ENCODE measurements at regions of chr15 and their contacts with region 1.

Region 1: GRCh38 chr15:73950831-73951561 is 24.7 kb downstream of the LOXL1 start:
- DNase-seq: peak; percentile 96
- H3K4me3 ChIP-seq: no peak overlapping the region
- H3K27ac ChIP-seq: peak overlapping the region; percentile 75 to 92
- H3K4me1 ChIP-seq: peaks cover 20 to 38% of the 10 kb centered on the region in 2 experiments
- H3K27me3 ChIP-seq: no peaks in the 10 kb centered on the region
- CTCF ChIP-seq: peak; percentile 87
- EP300 ChIP-seq: peak in 1 of 2 experiments; percentile 55; a peak in 2 of 4 replicates
- RAD21 ChIP-seq: peak; percentile 93

Region 2: GRCh38 chr15:73617301-73617831 is 333.6 kb before region 1 on chr15:
- CTCF ChIA-PET with region 1: no interaction called
- POLR2A ChIA-PET with region 1: no interaction called
- DNase-seq: no peak
- H3K4me3 ChIP-seq: no peak overlapping the region
- H3K27ac ChIP-seq: no peak overlapping the region
- H3K4me1 ChIP-seq: peaks cover 0 to 6% of the 10 kb centered on the region in 2 experiments; a peak in 3 of 4 replicates
- H3K27me3 ChIP-seq: no peaks in the 10 kb centered on the region
- CTCF ChIP-seq: no peak
- EP300 ChIP-seq: no peak
- RAD21 ChIP-seq: no peak

Region 3: DNA sequence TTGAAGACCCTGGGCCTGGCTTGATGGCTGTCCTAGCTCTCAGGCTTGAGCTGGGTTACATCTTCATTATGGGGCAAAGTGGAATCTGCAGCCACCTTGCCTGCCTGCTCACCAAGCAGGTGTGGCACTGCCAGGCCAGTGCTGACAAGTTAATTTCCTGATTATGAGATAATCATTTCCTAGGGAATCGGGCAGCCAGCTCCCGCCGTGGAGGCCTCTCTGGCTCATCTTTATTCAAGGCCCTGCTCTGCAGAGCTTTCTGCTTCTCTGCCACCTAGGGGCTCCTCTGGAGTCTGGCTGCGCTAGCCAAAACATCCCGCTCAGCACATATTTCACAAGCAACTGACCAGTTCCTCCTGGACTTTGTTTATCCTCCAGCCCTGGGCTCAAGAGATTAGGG is 14.8 kb before region 1 on chr15:
- CTCF ChIA-PET with region 1: interaction called, 10 read pairs
- POLR2A ChIA-PET with region 1: interaction called, 4 read pairs
- DNase-seq: peak; percentile 70
- H3K4me3 ChIP-seq: no peak overlapping the region
- H3K27ac ChIP-seq: peak overlapping the region in 1 of 2 experiments; percentile 64; a peak in 2 of 4 replicates
- H3K4me1 ChIP-seq: peaks cover 53 to 67% of the 10 kb centered on the region in 2 experiments
- H3K27me3 ChIP-seq: no peaks in the 10 kb centered on the region
- CTCF ChIP-seq: peak; percentile 24; the same call in 1 of the 2 replicates
- EP300 ChIP-seq: no peak
- RAD21 ChIP-seq: peak; percentile 36

Region 4: DNA sequence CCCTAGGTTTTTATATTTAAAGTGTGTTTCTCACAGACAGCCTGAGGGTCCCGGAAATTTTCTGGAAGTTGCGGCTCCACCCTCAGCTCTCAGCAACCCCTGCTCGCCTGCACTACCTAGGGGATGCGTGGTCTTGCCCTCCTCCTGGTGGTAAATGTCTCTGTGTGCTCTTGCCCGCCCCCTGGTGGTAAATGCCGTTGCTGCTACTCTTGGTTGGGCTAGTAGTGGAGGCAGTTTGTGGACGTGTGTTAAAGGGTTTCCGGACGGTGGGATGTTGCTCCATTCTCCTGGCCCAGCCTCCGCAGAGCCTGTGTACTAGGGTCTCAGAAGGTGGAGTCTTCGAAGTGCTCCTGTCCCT is 13.7 kb after region 1 on chr15:
- CTCF ChIA-PET with region 1: interaction called, 54 read pairs
- POLR2A ChIA-PET with region 1: no interaction called
- DNase-seq: peak; percentile 82
- H3K4me3 ChIP-seq: peak overlapping the region in 1 of 2 experiments; percentile 29; a peak in 1 of 4 replicates
- H3K27ac ChIP-seq: no peak overlapping the region
- H3K4me1 ChIP-seq: peaks cover 6 to 26% of the 10 kb centered on the region in 2 experiments; a peak in 3 of 4 replicates
- H3K27me3 ChIP-seq: no peaks in the 10 kb centered on the region
- CTCF ChIP-seq: peak; percentile 92
- EP300 ChIP-seq: no peak
- RAD21 ChIP-seq: peak; percentile 70

Region 5: DNA sequence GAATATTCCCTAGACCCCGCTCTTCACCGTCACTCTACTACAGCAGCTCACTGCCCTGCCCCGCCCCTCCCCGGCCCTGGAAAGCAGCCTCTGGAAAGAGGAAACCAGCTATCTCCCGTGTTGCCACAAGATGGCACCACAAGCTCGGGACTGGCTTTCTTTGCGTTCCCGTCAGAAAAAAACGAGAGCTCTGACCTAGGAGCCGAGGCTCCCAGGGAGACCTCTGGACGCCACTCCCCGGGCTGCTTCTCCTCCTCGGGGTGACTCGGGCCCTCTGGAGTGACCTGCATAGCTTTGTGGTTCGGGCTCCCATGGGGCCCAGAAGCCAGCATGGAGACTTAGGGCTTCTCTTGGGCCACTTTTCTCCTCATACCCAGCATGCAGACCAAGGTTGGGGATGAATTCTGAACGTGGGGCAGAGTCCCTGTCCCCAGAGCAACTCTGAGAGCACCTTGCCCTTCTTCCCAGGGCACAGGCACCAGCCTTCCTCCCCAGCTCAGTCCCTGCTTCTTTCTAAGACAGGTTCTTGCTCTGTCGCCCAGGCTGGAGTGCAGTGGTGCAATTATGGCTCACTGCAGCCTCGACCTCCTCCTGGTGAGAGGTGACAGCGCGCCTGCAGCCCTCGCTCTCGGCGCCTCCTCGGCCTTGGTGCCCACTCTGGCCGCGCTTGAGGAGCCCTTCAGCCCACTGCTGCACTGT is 22.1 kb after region 1 on chr15:
- CTCF ChIA-PET with region 1: interaction called, 20 read pairs
- POLR2A ChIA-PET with region 1: interaction called, 6 read pairs
- DNase-seq: peak; percentile 93
- H3K4me3 ChIP-seq: peak overlapping the region in 1 of 2 experiments; percentile 50; a peak in 1 of 4 replicates
- H3K27ac ChIP-seq: no peak overlapping the region
- H3K4me1 ChIP-seq: peaks cover 8 to 10% of the 10 kb centered on the region in 2 experiments; a peak in 2 of 4 replicates
- H3K27me3 ChIP-seq: no peaks in the 10 kb centered on the region
- CTCF ChIP-seq: peak; percentile 84
- EP300 ChIP-seq: no peak
- RAD21 ChIP-seq: peak; percentile 97

Region 6: DNA sequence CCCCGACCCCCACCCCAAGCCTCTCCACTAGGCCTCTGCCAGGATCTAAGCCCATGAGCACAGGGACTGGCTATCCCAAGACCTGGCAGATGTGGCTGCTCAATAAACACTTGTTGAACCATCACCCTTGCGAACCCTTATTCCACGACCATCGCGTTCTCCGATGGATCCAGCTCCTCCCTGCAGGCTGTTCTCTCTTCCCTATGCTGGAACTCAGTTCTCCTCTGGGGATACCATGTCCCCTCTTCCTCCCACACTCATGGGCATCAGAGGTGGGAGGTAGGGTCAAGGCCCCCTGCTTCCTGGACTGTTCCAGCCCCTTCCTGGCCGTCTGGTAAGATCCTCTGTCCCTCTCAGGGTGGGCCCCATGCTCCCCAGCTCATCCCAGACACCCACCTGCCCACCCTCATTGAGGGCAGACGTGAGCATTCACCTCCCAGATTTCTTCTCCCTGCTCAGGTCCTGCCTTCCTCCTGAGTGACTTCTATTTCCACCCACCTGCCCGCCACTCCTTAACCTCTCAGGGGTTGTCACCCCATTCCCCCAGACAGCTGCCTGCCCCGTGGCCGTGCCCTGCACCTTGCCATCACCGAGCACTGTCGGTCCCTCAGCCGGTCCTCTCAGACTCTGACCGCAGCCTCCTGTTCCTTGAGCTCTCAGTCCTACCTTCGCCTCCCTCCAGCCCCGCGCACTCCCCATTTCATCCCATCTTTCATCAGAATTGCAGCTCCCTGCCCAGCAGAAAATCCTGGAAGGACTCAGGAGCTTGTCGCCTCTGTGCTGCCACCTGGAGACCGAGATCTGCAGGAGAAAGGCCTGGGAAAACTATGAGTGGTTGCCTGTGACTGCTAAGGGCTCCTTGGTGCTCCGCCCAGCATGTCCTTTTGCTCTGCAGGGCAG is 85.5 kb after region 1 on chr15:
- CTCF ChIA-PET with region 1: interaction called, 17 read pairs
- POLR2A ChIA-PET with region 1: interaction called, 4 read pairs
- DNase-seq: peak; percentile 76
- H3K4me3 ChIP-seq: no peak overlapping the region; a peak in 1 of 4 replicates
- H3K27ac ChIP-seq: no peak overlapping the region
- H3K4me1 ChIP-seq: peaks cover 8 to 22% of the 10 kb centered on the region in 2 experiments; a peak in 2 of 4 replicates
- H3K27me3 ChIP-seq: no peaks in the 10 kb centered on the region
- CTCF ChIP-seq: peak; percentile 64
- EP300 ChIP-seq: no peak
- RAD21 ChIP-seq: peak; percentile 55

Region 7: DNA sequence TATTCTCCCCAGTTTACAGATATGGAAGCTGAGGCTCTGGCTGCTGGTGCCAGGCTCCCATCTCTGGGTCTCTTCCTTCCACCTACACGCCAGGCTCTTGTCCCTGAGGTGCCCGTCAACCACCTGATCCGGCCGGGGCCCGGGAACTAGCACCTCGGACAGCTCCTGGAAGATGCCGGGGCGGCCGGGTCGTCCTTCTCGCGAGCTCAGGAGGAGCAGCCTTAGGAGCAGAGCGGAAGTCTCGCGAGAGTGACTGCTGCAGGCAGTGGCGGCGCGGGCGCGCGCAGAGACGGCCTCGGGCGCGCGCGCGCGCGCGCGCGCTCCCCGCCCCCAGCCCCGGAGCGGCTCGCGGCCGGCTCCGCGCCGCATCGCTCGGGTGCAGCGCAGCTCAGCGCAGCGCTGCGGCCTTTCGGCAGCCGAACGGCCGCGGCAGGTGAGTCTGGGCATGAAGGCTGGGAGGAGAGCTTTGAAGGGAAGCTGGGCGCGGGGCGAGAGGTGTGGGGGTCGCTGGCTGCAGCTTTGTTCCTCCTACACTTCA is 1044.3 kb after region 1 on chr15 and contains the start of gene SCAMP5:
- CTCF ChIA-PET with region 1: no interaction called
- POLR2A ChIA-PET with region 1: no interaction called
- DNase-seq: peak; percentile 97
- H3K4me3 ChIP-seq: peak within 1 kb of the TSS; percentile 67 to 84
- H3K27ac ChIP-seq: peak within 1 kb of the TSS in 1 of 2 experiments; percentile 90; a peak in 2 of 4 replicates
- H3K4me1 ChIP-seq: peaks cover 0 to 17% of the 10 kb centered on the region in 2 experiments; a peak in 1 of 4 replicates
- H3K27me3 ChIP-seq: no peaks in the 10 kb centered on the region
- CTCF ChIP-seq: no peak
- EP300 ChIP-seq: 0 out of 4 replicates have a peak, but pooled peaks of 1 of the 2 experiments have one; percentile 2
- RAD21 ChIP-seq: no peak
- polyA plus RNA-seq, gene SCAMP5: 27.9 and 32.7 TPM in 2 replicates

Measured in SK-N-SH (cell line).